Panc1 (cell line): ENCODE measurements at regions of chr4 and their contacts with region 1.

Region 1: DNA sequence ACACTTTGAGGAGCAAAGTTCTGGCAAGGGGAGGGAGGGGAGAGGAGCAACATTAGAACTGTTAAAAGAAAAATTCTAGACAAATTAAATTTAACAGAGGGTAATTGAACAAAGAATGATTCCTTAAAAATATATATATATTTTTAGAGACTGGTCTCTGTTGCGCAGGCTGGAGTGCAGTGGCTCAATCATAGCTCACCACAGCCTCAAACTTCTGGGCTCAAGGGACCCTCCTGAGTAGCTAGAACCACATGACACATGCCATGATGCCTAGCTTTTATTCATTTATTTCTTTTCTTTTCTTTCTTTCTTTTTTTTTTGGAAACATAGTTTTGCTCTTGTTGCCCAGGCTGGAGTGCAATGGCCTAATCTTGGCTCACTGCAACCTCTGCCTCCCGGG is 19.1 kb upstream of the SPINK2 start:
- DNase-seq: no peak
- ATAC-seq: no peak
- H3K4me3 ChIP-seq: no peak overlapping the region
- H3K27ac ChIP-seq: no peak overlapping the region
- H3K4me1 ChIP-seq: no peaks in the 10 kb centered on the region
- H3K27me3 ChIP-seq: no peaks in the 10 kb centered on the region
- CTCF ChIP-seq: no peak

Region 2: DNA sequence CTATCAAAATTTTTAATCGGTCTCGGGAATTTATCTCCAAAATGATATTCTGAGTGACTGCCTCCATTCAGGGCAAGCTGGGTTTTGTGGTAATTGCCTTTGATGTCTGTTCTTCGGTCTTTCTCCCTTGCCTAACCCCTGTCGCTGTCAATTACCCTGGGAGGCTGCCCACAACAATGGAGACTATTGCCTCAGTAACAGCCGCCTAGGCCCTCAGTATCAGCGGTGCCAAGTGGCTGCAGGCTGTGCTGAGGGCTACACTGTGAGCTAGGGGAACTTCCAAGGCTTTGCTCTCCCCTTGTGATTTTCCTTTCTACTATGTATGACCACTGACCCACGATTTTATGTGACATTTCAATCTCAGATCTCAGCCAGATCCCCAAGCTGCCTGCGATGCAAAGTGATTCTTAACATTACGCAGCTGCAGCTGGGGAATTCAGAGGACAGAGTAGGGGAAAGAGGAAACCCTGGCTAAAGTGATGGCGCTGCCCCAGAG is 30.9 kb after region 1 on chr4:
- CTCF ChIA-PET with region 1: interaction called, 14 read pairs
- POLR2A ChIA-PET with region 1: no interaction called
- in situ Hi-C with region 1: no loop called
- intact Hi-C with region 1: no loop called
- DNase-seq: no peak
- ATAC-seq: no peak
- H3K4me3 ChIP-seq: no peak overlapping the region
- H3K27ac ChIP-seq: no peak overlapping the region
- H3K4me1 ChIP-seq: no peaks in the 10 kb centered on the region
- H3K27me3 ChIP-seq: no peaks in the 10 kb centered on the region
- CTCF ChIP-seq: no peak